ENCODE measurements at regions of chr16 and their contacts with region 1.

Region 1: DNA sequence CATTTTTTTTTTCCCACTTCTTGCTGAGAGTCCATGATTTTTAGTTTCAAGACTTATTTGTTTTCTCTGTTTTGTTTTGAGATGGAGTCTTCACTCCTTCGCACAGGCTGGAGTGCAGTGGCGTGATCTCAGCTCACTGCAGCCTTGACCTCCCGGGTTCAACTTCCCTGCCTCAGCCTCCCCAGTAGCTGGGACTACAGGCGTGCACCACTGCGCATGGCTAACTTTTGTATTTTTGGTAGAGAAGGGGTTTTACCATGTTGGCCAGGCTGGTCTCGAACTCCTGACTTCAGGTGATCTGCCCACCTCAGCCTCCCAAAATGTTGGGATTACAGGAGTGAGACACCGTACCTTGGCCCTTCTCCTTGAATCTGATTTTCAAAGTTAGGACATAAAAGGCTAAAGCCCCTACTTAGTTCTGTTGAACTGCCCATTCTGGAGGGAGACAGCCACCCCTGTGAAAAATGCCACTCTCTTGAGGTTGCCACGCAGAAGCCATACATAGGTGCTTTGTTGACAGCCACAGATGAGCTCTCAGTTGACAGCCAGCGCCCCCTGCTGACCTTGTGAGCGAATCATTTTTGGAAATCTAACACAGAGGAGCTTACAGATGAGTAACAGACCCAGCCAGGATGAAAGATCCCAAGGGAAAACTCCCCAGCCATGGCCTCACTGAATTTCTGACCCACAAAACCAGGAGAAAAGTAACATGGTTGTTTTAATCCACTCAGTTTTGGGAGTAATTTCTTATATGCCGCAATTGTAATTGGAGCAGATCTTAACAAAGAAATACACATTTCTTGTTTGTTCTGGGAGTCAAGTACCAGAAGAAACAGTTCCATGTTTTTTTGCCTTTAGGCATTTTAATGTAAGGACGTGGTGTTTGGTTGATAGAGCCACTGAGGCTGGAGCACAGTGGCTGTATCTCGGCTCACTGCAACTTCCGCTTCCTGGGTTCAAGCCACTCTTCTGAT is 38.8 kb downstream of the PKD1L3 start:
- DNase-seq: peak; percentile 92
- ATAC-seq: peak; percentile 97
- H3K4me3 Mint-ChIP-seq: no peak overlapping the region
- H3K27ac Mint-ChIP-seq: no peak overlapping the region
- H3K4me1 Mint-ChIP-seq: peaks cover 3% of the 10 kb centered on the region
- H3K27me3 Mint-ChIP-seq: no peaks in the 10 kb centered on the region
- CTCF ChIP-seq: peak; percentile 90

Region 2: GRCh38 chr16:71564155-71564967 is 397.0 kb before region 1 on chr16:
- CTCF ChIA-PET with region 1: interaction called, 10 read pairs
- POLR2A ChIA-PET with region 1: no interaction called
- intact Hi-C with region 1: no loop called
- DNase-seq: no peak
- ATAC-seq: no peak
- H3K4me3 Mint-ChIP-seq: peak overlapping the region; percentile 86
- H3K27ac Mint-ChIP-seq: peak overlapping the region; percentile 96
- H3K4me1 Mint-ChIP-seq: peaks cover 15% of the 10 kb centered on the region
- H3K27me3 Mint-ChIP-seq: no peaks in the 10 kb centered on the region
- CTCF ChIP-seq: no peak

Region 3: GRCh38 chr16:71734511-71734910 is 226.8 kb before region 1 on chr16:
- CTCF ChIA-PET with region 1: interaction called, 14 read pairs
- POLR2A ChIA-PET with region 1: no interaction called
- intact Hi-C with region 1: loop called (anchors 10 kb)
- DNase-seq: no peak
- ATAC-seq: no peak
- H3K4me3 Mint-ChIP-seq: no peak overlapping the region
- H3K27ac Mint-ChIP-seq: no peak overlapping the region
- H3K4me1 Mint-ChIP-seq: peaks cover 6% of the 10 kb centered on the region
- H3K27me3 Mint-ChIP-seq: no peaks in the 10 kb centered on the region
- CTCF ChIP-seq: no peak

Region 4: GRCh38 chr16:71916397-71916920 is 44.9 kb before region 1 on chr16:
- CTCF ChIA-PET with region 1: interaction called, 11 read pairs
- POLR2A ChIA-PET with region 1: no interaction called
- intact Hi-C with region 1: no loop called
- DNase-seq: no peak
- ATAC-seq: no peak
- H3K4me3 Mint-ChIP-seq: no peak overlapping the region
- H3K27ac Mint-ChIP-seq: peak overlapping the region; percentile 44
- H3K4me1 Mint-ChIP-seq: peaks cover 43% of the 10 kb centered on the region
- H3K27me3 Mint-ChIP-seq: no peaks in the 10 kb centered on the region
- CTCF ChIP-seq: no peak

Region 5: DNA sequence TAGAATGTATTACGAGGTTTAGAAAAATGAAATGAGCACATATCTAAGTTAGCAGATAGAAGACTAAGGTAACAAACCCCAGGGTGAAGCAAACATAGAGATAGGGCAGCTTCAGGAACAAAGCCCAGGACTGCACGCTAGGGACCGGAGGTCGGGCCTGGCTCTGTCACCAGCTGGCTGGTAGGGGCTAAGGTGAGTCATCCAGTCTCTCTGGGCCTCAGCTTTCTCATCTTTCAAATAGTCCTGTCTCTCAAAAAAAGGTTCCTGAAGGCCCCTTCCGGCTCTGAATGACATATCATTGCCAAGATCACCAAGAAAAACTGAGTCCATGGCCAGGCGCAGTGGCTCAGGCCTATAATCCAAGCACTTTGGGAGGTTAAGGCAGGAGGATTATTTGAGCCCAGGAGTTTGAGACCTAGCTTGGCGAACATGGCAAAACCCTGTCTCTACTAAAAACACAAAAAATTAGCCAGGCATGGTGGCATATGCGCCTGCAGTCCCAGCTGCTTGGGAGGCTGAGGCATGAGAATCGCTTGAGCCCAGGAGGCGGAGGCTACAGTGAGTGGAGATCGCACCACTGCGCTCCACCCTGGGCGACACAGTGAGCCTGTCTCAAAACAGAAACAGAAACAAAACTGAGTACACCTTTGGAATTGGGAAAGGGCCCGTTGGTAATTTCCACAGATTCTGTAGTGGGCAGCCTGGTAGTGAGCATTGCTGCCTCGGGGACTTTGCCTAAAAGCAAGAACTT is 12.9 kb after region 1 on chr16:
- CTCF ChIA-PET with region 1: interaction called, 27 read pairs
- POLR2A ChIA-PET with region 1: no interaction called
- intact Hi-C with region 1: no loop called
- DNase-seq: no peak
- ATAC-seq: no peak
- H3K4me3 Mint-ChIP-seq: no peak overlapping the region
- H3K27ac Mint-ChIP-seq: no peak overlapping the region
- H3K4me1 Mint-ChIP-seq: no peaks in the 10 kb centered on the region
- H3K27me3 Mint-ChIP-seq: peaks cover 2% of the 10 kb centered on the region
- CTCF ChIP-seq: no peak

Measured in activated CD8-positive, alpha-beta T cell treated with anti-CD3 and anti-CD28 coated beads for 36 hours (primary cell).